Panc1 (cell line): ENCODE measurements at regions of chr6 and their contacts with region 1.

Region 1: GRCh38 chr6:21414065-21414464 is 179.5 kb upstream of the SOX4 start:
- DNase-seq: no peak
- ATAC-seq: no peak
- H3K4me3 ChIP-seq: no peak overlapping the region
- H3K27ac ChIP-seq: no peak overlapping the region
- H3K4me1 ChIP-seq: no peaks in the 10 kb centered on the region
- H3K27me3 ChIP-seq: no peaks in the 10 kb centered on the region
- CTCF ChIP-seq: no peak

Region 2: GRCh38 chr6:21005816-21006570 is 408.1 kb before region 1 on chr6:
- CTCF ChIA-PET with region 1: interaction called, 11 read pairs
- POLR2A ChIA-PET with region 1: no interaction called
- in situ Hi-C with region 1: no loop called
- intact Hi-C with region 1: no loop called
- DNase-seq: peak; percentile 86
- ATAC-seq: peak; percentile 89
- H3K4me3 ChIP-seq: no peak overlapping the region
- H3K27ac ChIP-seq: peak overlapping the region; percentile 23; the same call in 1 of the 2 replicates
- H3K4me1 ChIP-seq: peaks cover 5% of the 10 kb centered on the region
- H3K27me3 ChIP-seq: no peaks in the 10 kb centered on the region
- CTCF ChIP-seq: no peak

Region 3: GRCh38 chr6:21478863-21479539 is 64.9 kb after region 1 on chr6:
- CTCF ChIA-PET with region 1: no interaction called
- POLR2A ChIA-PET with region 1: no interaction called
- in situ Hi-C with region 1: no loop called
- intact Hi-C with region 1: no loop called
- DNase-seq: no peak
- ATAC-seq: peak; percentile 69; the same call in 1 of the 2 replicates
- H3K4me3 ChIP-seq: peak overlapping the region; percentile 15 to 39
- H3K27ac ChIP-seq: no peak overlapping the region
- H3K4me1 ChIP-seq: peaks cover 6% of the 10 kb centered on the region; the same call in 1 of the 2 replicates
- H3K27me3 ChIP-seq: no peaks in the 10 kb centered on the region
- CTCF ChIP-seq: no peak